PC-3 (cell line): ENCODE measurements at regions of chr21 and their contacts with region 1.

Region 1: GRCh38 chr21:30710499-30710898 is 8.1 kb downstream of the KRTAP21-3 start:
- DNase-seq: no peak
- ATAC-seq: no peak
- H3K4me3 ChIP-seq: no peak overlapping the region
- H3K27ac ChIP-seq: no peak overlapping the region
- H3K4me1 ChIP-seq: peaks cover 15% of the 10 kb centered on the region
- H3K27me3 ChIP-seq: no peaks in the 10 kb centered on the region
- CTCF ChIP-seq: no peak

Region 2: DNA sequence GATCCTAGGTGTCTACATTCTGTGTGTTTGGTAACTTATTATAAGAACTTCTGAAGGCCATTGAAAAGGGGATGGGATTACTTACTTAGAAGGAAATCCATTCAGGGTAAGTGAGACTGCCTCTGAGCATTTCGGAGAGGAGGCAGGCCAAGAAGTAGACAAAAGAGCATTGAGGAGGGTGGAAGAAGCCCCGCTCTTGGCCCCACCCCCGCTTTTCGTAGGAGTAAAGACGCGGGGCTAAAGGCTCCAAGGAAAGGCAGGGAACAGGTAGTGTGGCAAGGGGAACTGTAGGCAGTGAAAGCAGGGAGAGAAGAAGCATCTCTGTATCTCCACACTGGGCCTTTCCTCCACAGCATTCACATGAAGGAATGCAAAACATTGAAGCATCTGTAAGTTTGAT is 718.9 kb before region 1 on chr21:
- CTCF ChIA-PET with region 1: no interaction called
- POLR2A ChIA-PET with region 1: no interaction called
- intact Hi-C with region 1: no loop called
- DNase-seq: no peak
- ATAC-seq: no peak
- H3K4me3 ChIP-seq: no peak overlapping the region
- H3K27ac ChIP-seq: no peak overlapping the region
- H3K4me1 ChIP-seq: no peaks in the 10 kb centered on the region
- H3K27me3 ChIP-seq: peaks cover 16% of the 10 kb centered on the region; the same call in 1 of the 2 replicates
- CTCF ChIP-seq: no peak

Region 3: GRCh38 chr21:30502041-30502440 is 208.5 kb before region 1 on chr21 and contains the start of gene KRTAP19-5:
- CTCF ChIA-PET with region 1: no interaction called
- POLR2A ChIA-PET with region 1: no interaction called
- intact Hi-C with region 1: loop called (anchors 1 kb)
- DNase-seq: no peak
- ATAC-seq: no peak
- H3K4me3 ChIP-seq: no peak within 1 kb of the TSS
- H3K27ac ChIP-seq: no peak within 1 kb of the TSS
- H3K4me1 ChIP-seq: no peaks in the 10 kb centered on the region
- H3K27me3 ChIP-seq: no peaks in the 10 kb centered on the region; the same call in 1 of the 2 replicates
- CTCF ChIP-seq: no peak
- total RNA-seq, gene KRTAP19-5: not detected in 2 replicates

Region 4: DNA sequence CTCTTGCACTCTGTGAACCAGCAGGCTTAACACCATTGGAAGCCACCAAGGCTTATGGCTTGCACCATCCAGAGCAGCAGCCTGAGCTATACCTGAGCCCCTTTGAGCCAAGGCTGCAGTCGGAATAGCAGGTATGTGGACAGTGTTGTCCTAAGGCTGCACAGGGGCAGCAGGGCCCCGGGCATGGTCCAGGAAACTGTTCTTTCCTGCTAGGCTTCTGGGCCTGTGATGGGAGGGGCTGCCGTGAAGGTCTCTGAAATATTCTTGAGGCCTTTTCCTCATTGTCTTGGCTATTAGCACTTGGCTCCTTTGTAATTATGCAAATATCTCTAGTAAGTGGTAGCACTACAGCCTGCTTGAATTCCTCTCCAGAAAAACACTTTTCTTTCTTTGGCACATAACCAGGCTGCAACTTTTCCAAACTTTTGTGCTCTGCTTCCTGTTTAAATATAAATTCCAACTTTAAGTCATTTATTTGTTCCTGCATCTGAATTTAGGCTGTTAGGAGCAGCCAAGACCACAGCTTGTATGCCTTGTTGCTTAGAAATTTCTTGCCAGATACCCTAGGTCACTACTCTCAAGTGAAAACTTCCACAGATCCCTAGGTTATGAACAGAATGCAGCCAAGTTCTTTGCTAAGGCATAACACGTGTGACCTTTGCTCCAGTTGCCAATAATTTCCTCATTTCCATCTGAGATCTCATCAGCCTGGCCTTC is 84.9 kb before region 1 on chr21:
- CTCF ChIA-PET with region 1: no interaction called
- POLR2A ChIA-PET with region 1: no interaction called
- intact Hi-C with region 1: loop called (anchors 1 kb)
- DNase-seq: no peak
- ATAC-seq: no peak
- H3K4me3 ChIP-seq: no peak overlapping the region
- H3K27ac ChIP-seq: no peak overlapping the region
- H3K4me1 ChIP-seq: peaks cover 28% of the 10 kb centered on the region
- H3K27me3 ChIP-seq: no peaks in the 10 kb centered on the region
- CTCF ChIP-seq: no peak